Endothelial cell of umbilical vein (primary cell): ENCODE measurements at regions of chr16 and their contacts with region 1.

Region 1: DNA sequence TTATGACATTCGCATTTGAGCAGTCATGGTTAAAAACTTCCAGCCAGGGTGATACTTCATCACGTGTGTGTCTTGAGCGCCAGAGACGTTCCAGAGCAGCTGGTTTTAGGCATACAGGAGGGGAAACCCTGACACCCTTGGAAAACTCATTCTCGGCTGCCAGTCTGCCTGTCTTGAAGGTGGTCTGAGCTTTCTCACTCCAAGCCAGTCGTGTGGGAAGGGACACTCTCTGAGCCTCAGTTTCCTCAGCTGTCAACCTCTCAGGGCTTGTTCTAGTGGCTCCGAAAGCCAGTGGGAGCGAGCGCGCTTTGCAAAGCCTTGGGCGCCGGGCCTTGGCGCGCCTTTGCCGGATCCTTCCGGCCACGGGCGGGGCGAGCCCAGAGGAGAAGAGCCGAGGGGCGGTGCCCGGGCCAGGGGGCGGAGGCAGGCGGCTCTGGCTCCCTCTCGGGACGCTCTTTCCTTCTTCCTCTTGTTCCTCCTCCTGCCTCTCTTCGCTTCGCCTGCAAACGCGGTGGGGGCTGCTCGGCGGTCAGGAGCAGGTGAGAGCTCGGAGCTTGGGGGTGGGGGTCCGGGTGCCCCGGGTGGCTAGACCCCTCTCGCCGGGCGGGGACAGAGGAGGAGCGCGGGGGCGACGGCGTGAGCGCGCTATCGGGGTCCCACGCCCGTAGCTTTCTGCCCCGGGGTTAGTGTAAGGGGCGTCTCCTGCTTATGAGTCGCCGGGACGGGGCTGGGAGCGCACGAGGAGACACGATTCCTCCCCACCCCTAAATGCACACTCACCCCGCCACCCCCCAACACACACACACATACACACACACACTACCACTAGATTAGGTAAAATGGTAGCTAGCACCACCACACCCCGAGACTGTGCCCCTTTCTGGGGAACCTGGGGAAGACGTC is at the start of gene LDAF1:
- DNase-seq: peak; percentile 62
- H3K4me3 ChIP-seq: peak within 1 kb of the TSS; percentile 58 to 83 (median 64)
- H3K27ac ChIP-seq: no peak within 1 kb of the TSS
- H3K4me1 ChIP-seq: peaks cover 13% of the 10 kb centered on the region
- H3K27me3 ChIP-seq: no peaks in the 10 kb centered on the region
- CTCF ChIP-seq: no peak
- POLR2A ChIP-seq: no peak
- total RNA-seq, gene LDAF1: 19.4 and 20.4 TPM in 2 replicates

Region 2: GRCh38 chr16:20806168-20807050 is 352.1 kb before region 1 on chr16 and contains the starts of genes ERI2 and REXO5:
- CTCF ChIA-PET with region 1: no interaction called
- POLR2A ChIA-PET with region 1: no interaction called
- dilution Hi-C with region 1: no loop called
- intact Hi-C with region 1: loop called (anchors 1 kb)
- DNase-seq: peak; percentile 94
- H3K4me3 ChIP-seq: peak within 1 kb of the TSS; percentile 44 to 68 (median 50)
- H3K27ac ChIP-seq: peak within 1 kb of the TSS; percentile 49
- H3K4me1 ChIP-seq: peaks cover 8% of the 10 kb centered on the region
- H3K27me3 ChIP-seq: no peaks in the 10 kb centered on the region
- CTCF ChIP-seq: peak; percentile 36 to 66
- POLR2A ChIP-seq: peak; percentile 76
- total RNA-seq, gene ERI2: 8.9 and 9.3 TPM in 2 replicates
- total RNA-seq, gene REXO5: 7.4 and 11.5 TPM in 2 replicates

Region 3: DNA sequence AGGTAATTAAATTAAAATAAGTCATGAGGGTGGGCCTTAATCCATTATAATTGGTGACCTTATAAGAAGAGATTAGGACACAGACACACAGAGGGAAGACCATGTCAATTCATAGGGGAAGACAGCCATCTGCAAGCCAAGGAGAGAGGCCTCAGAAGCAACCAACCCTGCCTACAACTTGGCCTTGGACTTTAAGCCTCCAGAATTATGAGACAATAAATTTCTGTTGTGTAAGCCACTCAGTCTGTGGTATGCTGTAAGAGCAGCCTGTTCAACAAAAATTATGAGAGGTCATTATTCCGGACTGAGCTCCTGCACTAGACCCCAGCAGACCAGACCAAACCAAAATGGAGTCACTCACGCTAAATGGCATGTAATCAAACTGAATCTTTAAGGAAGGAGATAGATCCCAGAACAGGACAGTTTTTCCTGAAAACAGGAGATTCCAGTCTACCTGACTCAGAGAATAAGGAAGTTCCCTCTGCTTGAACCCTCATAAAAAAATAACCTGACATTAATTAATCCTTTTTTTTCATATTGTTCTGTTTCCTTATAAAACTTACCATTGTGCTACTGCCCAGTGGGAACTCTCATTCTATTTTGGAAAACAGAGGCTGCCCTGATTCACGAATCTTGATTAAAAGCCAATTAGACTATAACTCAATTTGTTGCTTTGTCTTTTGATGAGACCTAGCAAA is 82.1 kb before region 1 on chr16:
- CTCF ChIA-PET with region 1: no interaction called
- POLR2A ChIA-PET with region 1: no interaction called
- dilution Hi-C with region 1: no loop called
- intact Hi-C with region 1: loop called (anchors 1 kb)
- DNase-seq: peak; percentile 37
- H3K4me3 ChIP-seq: no peak overlapping the region
- H3K27ac ChIP-seq: peak overlapping the region; percentile 46
- H3K4me1 ChIP-seq: peaks cover 15% of the 10 kb centered on the region
- H3K27me3 ChIP-seq: no peaks in the 10 kb centered on the region
- CTCF ChIP-seq: no peak
- POLR2A ChIP-seq: no peak

Region 4: DNA sequence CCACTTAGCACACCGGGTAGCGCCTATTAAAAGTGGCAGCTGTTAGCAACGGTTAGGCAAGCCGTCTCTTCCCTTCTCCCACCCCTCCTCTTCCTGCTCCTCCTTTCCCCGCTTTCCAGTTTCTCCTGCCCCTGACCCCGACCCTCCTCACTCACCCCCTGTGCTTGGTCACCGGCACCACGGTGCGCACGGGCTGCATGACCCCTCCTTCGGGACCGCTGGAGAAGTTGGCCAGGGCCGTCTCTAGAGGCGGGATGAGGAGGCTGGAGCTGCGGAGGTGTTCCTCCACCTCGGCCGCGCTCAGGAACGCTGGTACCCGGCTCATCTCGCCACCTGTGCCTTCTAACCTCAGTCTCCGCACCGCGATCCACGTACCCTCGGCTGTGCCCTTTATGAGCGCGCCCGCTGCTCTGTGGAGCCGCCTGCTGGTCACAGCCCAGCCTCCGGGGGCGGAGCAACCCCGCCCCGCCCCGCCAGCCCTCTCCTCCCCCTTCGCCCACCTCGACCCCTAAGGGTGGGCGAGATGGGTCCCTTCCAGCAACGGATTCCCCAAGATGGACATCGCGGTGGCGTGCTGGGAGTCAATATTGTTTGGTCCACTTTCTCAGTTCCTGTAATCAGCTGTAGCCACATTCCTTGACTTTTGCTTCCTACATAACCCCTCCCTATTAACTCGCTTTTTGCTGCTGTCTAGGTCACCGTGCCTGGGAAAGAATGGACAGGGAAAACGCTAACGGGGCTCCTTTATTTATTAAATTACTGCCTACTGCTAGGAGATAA is 119.7 kb after region 1 on chr16 and contains the start of gene CRYM:
- CTCF ChIA-PET with region 1: interaction called, 3 read pairs
- POLR2A ChIA-PET with region 1: no interaction called
- dilution Hi-C with region 1: no loop called
- intact Hi-C with region 1: loop called (anchors 2 kb)
- DNase-seq: peak; percentile 36
- H3K4me3 ChIP-seq: peak within 1 kb of the TSS in 1 of 3 experiments; percentile 19
- H3K27ac ChIP-seq: no peak within 1 kb of the TSS
- H3K4me1 ChIP-seq: peaks cover 2% of the 10 kb centered on the region
- H3K27me3 ChIP-seq: peaks cover 25 to 36% of the 10 kb centered on the region in 2 experiments
- CTCF ChIP-seq: peak; percentile 57 to 86
- POLR2A ChIP-seq: no peak
- total RNA-seq, gene CRYM: not detected in 2 replicates

Region 5: GRCh38 chr16:22321339-22322001 is 1163.0 kb after region 1 on chr16:
- CTCF ChIA-PET with region 1: interaction called, 10 read pairs
- POLR2A ChIA-PET with region 1: no interaction called
- dilution Hi-C with region 1: no loop called
- intact Hi-C with region 1: loop called (anchors 5 kb)
- DNase-seq: peak; percentile 81
- H3K4me3 ChIP-seq: no peak overlapping the region
- H3K27ac ChIP-seq: peak overlapping the region; percentile 67
- H3K4me1 ChIP-seq: peaks cover 14% of the 10 kb centered on the region
- H3K27me3 ChIP-seq: no peaks in the 10 kb centered on the region
- CTCF ChIP-seq: peak; percentile 72 to 79
- POLR2A ChIP-seq: no peak